SK-N-SH (cell line): ENCODE measurements at regions of chr17 and their contacts with region 1.

Region 1: GRCh38 chr17:45135192-45135977 is at the start of gene ACBD4:
- DNase-seq: peak; percentile 96
- H3K4me3 ChIP-seq: peak within 1 kb of the TSS; percentile 81 to 85
- H3K27ac ChIP-seq: peak within 1 kb of the TSS in 1 of 2 experiments; percentile 60; a peak in 1 of 4 replicates
- H3K4me1 ChIP-seq: peaks cover 0 to 25% of the 10 kb centered on the region in 2 experiments; a peak in 1 of 4 replicates
- H3K27me3 ChIP-seq: no peaks in the 10 kb centered on the region
- CTCF ChIP-seq: peak; percentile 100
- EP300 ChIP-seq: no peak
- RAD21 ChIP-seq: peak; percentile 95
- polyA plus RNA-seq, gene ACBD4: 15.8 and 18.1 TPM in 2 replicates

Region 2: GRCh38 chr17:44899069-44899782 is 236.2 kb before region 1 on chr17 and contains the start of gene EFTUD2:
- CTCF ChIA-PET with region 1: interaction called, 14 read pairs
- POLR2A ChIA-PET with region 1: no interaction called
- DNase-seq: peak; percentile 96
- H3K4me3 ChIP-seq: peak within 1 kb of the TSS; percentile 92 to 97
- H3K27ac ChIP-seq: peak within 1 kb of the TSS; percentile 94 to 99
- H3K4me1 ChIP-seq: peaks cover 6 to 23% of the 10 kb centered on the region in 2 experiments; a peak in 3 of 4 replicates
- H3K27me3 ChIP-seq: no peaks in the 10 kb centered on the region
- CTCF ChIP-seq: no peak
- EP300 ChIP-seq: no peak; a peak in 1 of 4 replicates
- RAD21 ChIP-seq: no peak
- polyA plus RNA-seq, gene EFTUD2: 79.9 and 82.9 TPM in 2 replicates

Region 3: GRCh38 chr17:45051060-45051719 is 84.2 kb before region 1 on chr17 and contains the start of gene DCAKD:
- CTCF ChIA-PET with region 1: interaction called, 10 read pairs
- POLR2A ChIA-PET with region 1: no interaction called
- DNase-seq: peak; percentile 96
- H3K4me3 ChIP-seq: peak within 1 kb of the TSS; percentile 60 to 79
- H3K27ac ChIP-seq: peak within 1 kb of the TSS; percentile 92
- H3K4me1 ChIP-seq: no peaks in the 10 kb centered on the region; a peak in 1 of 4 replicates
- H3K27me3 ChIP-seq: no peaks in the 10 kb centered on the region
- CTCF ChIP-seq: no peak
- EP300 ChIP-seq: no peak
- RAD21 ChIP-seq: no peak
- polyA plus RNA-seq, gene DCAKD: 47.6 and 48.8 TPM in 2 replicates

Region 4: GRCh38 chr17:45115871-45116724 is 19.3 kb before region 1 on chr17:
- CTCF ChIA-PET with region 1: interaction called, 169 read pairs
- POLR2A ChIA-PET with region 1: no interaction called
- DNase-seq: no peak
- H3K4me3 ChIP-seq: no peak overlapping the region
- H3K27ac ChIP-seq: no peak overlapping the region; a peak in 1 of 4 replicates
- H3K4me1 ChIP-seq: peaks cover 0 to 29% of the 10 kb centered on the region in 2 experiments; a peak in 1 of 4 replicates
- H3K27me3 ChIP-seq: no peaks in the 10 kb centered on the region
- CTCF ChIP-seq: no peak
- EP300 ChIP-seq: no peak
- RAD21 ChIP-seq: no peak

Region 5: DNA sequence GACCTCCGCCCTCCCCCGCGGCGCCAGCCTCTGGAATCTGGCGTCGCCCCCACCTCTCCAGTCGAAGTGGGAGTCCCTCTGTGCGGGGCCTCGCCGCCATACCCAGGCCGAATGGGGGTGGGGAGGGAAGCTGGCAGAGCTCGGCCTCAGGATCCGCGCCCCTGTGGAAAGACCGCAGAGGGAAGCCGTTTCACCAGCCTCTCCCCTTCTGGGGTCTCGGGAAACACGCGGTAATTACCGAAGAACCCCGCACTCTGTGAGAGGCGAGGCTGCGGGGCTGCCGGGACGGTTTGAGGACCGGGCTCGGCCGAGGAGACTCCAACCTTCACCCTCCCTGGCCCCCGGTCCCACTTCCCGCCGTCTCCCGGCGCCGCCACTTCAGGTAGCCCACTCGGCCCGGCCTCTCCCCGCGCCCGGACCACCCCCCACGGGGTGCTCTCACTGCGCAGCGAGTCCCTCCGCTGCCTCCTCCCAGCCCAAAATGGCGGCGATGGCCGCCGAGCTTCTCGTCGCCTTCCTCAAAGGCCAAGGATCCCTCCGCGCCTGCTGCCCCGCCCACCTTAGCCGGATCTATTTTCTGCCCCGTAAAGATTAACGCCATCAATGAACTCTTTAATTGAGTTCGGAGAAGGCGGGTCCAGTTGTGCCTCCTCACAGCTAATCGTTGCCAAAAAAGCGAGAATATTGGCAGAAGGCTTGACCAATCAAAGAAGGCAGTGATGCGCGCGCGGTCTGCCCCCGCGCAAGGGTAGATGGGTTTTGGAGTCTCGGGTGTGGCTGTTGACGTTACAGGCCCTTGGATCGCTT is 25.8 kb after region 1 on chr17:
- CTCF ChIA-PET with region 1: interaction called, 96 read pairs
- POLR2A ChIA-PET with region 1: interaction called, 3 read pairs
- DNase-seq: peak; percentile 96
- H3K4me3 ChIP-seq: peak overlapping the region; percentile 74 to 91
- H3K27ac ChIP-seq: peak overlapping the region; percentile 90 to 94
- H3K4me1 ChIP-seq: peaks cover 6 to 18% of the 10 kb centered on the region in 2 experiments; a peak in 2 of 4 replicates
- H3K27me3 ChIP-seq: no peaks in the 10 kb centered on the region
- CTCF ChIP-seq: peak; percentile 34
- EP300 ChIP-seq: peak in 1 of 2 experiments; percentile 55; a peak in 1 of 4 replicates
- RAD21 ChIP-seq: no peak

Region 6: GRCh38 chr17:45197555-45198334 is 62.4 kb after region 1 on chr17:
- CTCF ChIA-PET with region 1: interaction called, 181 read pairs
- POLR2A ChIA-PET with region 1: interaction called, 10 read pairs
- DNase-seq: peak; percentile 93
- H3K4me3 ChIP-seq: peak overlapping the region in 1 of 2 experiments; percentile 54; a peak in 1 of 4 replicates
- H3K27ac ChIP-seq: peak overlapping the region; percentile 41 to 46; a peak in 3 of 4 replicates
- H3K4me1 ChIP-seq: peaks cover 5 to 8% of the 10 kb centered on the region in 2 experiments; a peak in 3 of 4 replicates
- H3K27me3 ChIP-seq: no peaks in the 10 kb centered on the region
- CTCF ChIP-seq: peak; percentile 98
- EP300 ChIP-seq: no peak
- RAD21 ChIP-seq: peak; percentile 95

Region 7: DNA sequence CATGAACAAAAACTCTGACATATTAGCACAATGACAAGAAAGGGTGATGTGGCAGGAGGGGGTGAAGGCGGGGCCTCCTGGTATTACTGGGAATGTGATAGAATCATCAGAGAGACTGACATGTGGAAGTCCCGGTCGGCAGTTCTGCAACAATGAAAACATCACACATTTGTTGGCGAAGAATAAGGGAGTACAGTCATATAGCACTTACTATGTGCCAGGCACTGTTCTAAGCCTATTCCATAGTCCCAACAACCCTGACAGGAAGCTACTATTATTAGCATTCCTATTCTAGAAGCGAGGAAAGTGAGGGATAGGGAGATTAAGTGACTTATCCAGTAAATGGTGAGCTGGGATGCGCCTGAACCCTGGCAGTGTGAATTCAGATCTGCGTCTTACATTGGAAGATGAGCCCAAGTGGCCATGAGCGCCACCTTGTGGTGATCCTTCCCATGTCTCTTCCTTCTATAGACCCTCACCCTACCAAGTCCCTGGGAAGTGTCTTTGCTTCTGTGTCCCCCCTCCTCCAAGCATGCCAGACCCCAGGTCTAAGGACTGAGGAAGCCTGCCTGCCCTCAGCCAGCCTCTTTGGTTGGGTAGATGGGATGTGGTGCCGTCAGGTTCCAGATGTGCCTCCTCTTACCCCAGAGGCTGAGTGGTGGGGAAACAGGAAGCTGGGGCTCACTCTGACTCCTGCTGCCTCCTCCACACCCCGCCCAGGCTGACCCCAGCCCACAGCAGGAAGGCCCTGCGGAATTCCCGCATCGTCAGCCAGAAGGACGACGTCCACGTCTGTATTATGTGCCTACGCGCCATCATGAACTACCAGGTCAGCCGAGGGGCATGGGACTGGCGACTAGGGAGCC is 100.3 kb after region 1 on chr17:
- CTCF ChIA-PET with region 1: interaction called, 27 read pairs
- POLR2A ChIA-PET with region 1: no interaction called
- DNase-seq: peak; percentile 81
- H3K4me3 ChIP-seq: no peak overlapping the region
- H3K27ac ChIP-seq: no peak overlapping the region
- H3K4me1 ChIP-seq: peaks cover 4 to 16% of the 10 kb centered on the region in 2 experiments; a peak in 2 of 4 replicates
- H3K27me3 ChIP-seq: no peaks in the 10 kb centered on the region
- CTCF ChIP-seq: peak; percentile 83
- EP300 ChIP-seq: no peak
- RAD21 ChIP-seq: peak; percentile 65